ENCODE measurements at regions of chr21 and their contacts with region 1.

Region 1: GRCh38 chr21:34603002-34603709 is 11.8 kb downstream of the RCAN1 start:
- DNase-seq: peak; percentile 92

Region 2: GRCh38 chr21:34510148-34511142 is 92.7 kb before region 1 on chr21:
- intact Hi-C with region 1: loop called (anchors 1 kb)
- DNase-seq: peak; percentile 94